ENCODE measurements at regions of chr10 and their contacts with region 1.

Region 1: GRCh38 chr10:100433253-100434240 is 29.3 kb upstream of the WNT8B start:
- DNase-seq: peak; percentile 88 to 99 (median 94)
- ATAC-seq: peak; percentile 99
- H3K4me3 ChIP-seq: no peak overlapping the region
- H3K4me3 Mint-ChIP-seq: no peak overlapping the region
- H3K27ac ChIP-seq: no peak overlapping the region
- H3K27ac Mint-ChIP-seq: no peak overlapping the region
- H3K4me1 ChIP-seq: peaks cover 5% of the 10 kb centered on the region
- H3K4me1 Mint-ChIP-seq: no peaks in the 10 kb centered on the region
- H3K27me3 ChIP-seq: no peaks in the 10 kb centered on the region
- H3K27me3 Mint-ChIP-seq: peaks cover 5% of the 10 kb centered on the region
- CTCF ChIP-seq: peak; percentile 100

Region 2: DNA sequence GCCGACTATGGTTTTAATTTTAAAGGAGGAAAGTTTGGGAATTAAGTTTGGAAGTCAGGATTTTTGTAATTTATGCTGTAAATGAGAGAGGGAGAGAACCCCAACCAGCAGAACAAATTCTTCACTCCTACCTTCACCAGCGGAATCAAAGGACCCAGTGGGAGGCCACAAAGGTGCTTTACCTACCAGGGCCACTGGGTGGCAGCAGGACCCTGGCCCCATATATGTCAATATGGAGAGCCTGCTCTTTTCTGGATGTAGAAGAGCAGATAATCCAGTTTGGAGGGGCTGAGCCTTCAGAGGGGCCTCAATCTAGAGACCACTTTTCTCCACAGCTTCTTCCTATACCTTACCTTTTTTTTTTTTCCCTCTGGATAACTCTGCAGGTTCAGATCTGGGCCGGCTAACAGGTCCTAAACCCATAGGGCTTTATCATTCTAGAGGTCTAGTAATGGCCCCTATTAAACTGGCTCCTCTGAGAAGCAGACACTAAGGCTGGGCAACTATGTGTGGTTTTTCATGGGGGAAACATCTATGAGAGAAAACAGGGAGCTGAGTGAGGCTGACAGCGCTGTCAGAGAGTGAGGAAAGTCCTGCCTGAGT is 95.0 kb before region 1 on chr10:
- CTCF ChIA-PET with region 1: interaction called, 10 read pairs
- POLR2A ChIA-PET with region 1: interaction called, 3 read pairs
- intact Hi-C with region 1: loop called (anchors 1 kb)
- DNase-seq: peak; percentile 66 to 85 (median 76)
- ATAC-seq: peak; percentile 94
- H3K4me3 ChIP-seq: no peak overlapping the region
- H3K4me3 Mint-ChIP-seq: no peak overlapping the region
- H3K27ac ChIP-seq: no peak overlapping the region
- H3K27ac Mint-ChIP-seq: no peak overlapping the region
- H3K4me1 ChIP-seq: no peaks in the 10 kb centered on the region
- H3K4me1 Mint-ChIP-seq: no peaks in the 10 kb centered on the region
- H3K27me3 ChIP-seq: no peaks in the 10 kb centered on the region
- H3K27me3 Mint-ChIP-seq: peaks cover 4% of the 10 kb centered on the region
- CTCF ChIP-seq: peak; percentile 87

Region 3: GRCh38 chr10:100419911-100420449 is 13.6 kb before region 1 on chr10:
- CTCF ChIA-PET with region 1: no interaction called
- POLR2A ChIA-PET with region 1: no interaction called
- intact Hi-C with region 1: no loop called
- DNase-seq: no peak
- ATAC-seq: no peak
- H3K4me3 ChIP-seq: no peak overlapping the region
- H3K4me3 Mint-ChIP-seq: no peak overlapping the region
- H3K27ac ChIP-seq: no peak overlapping the region
- H3K27ac Mint-ChIP-seq: no peak overlapping the region
- H3K4me1 ChIP-seq: no peaks in the 10 kb centered on the region
- H3K4me1 Mint-ChIP-seq: no peaks in the 10 kb centered on the region
- H3K27me3 ChIP-seq: no peaks in the 10 kb centered on the region
- H3K27me3 Mint-ChIP-seq: peaks cover 16% of the 10 kb centered on the region
- CTCF ChIP-seq: no peak

Region 4: DNA sequence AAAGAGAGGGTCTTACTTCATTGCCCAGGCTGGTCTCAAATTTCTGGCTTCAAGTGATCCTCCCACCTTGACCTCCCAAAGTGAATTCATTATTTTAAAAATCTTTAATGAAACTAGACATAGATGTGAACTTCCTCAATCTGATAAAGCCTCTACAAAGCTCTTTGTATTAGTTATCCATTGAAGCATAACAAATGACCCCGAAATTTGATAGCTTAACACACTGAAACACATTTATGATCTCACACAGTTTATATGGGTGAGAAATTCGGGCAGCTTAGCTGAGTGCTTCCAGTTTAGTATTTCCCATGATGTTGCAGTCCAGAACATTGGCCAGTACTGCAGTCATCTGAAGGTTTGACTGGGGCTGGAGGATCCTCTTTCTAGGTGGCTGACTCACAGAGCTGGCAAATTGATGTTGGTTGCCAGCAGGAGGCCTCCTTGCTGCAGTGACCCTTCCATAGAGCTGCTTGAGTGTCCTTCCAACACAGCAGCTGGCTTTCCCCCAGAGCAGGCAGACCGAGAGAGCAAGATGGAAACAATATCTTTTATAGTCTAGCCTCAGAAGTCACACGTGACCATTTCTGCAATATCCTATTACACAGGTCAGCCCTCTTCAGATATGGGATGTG is 12.7 kb after region 1 on chr10:
- CTCF ChIA-PET with region 1: no interaction called
- POLR2A ChIA-PET with region 1: no interaction called
- intact Hi-C with region 1: no loop called
- DNase-seq: no peak
- ATAC-seq: no peak
- H3K4me3 ChIP-seq: no peak overlapping the region
- H3K4me3 Mint-ChIP-seq: no peak overlapping the region
- H3K27ac ChIP-seq: no peak overlapping the region
- H3K27ac Mint-ChIP-seq: no peak overlapping the region
- H3K4me1 ChIP-seq: no peaks in the 10 kb centered on the region
- H3K4me1 Mint-ChIP-seq: no peaks in the 10 kb centered on the region
- H3K27me3 ChIP-seq: no peaks in the 10 kb centered on the region
- H3K27me3 Mint-ChIP-seq: peaks cover 8% of the 10 kb centered on the region
- CTCF ChIP-seq: no peak

Region 5: DNA sequence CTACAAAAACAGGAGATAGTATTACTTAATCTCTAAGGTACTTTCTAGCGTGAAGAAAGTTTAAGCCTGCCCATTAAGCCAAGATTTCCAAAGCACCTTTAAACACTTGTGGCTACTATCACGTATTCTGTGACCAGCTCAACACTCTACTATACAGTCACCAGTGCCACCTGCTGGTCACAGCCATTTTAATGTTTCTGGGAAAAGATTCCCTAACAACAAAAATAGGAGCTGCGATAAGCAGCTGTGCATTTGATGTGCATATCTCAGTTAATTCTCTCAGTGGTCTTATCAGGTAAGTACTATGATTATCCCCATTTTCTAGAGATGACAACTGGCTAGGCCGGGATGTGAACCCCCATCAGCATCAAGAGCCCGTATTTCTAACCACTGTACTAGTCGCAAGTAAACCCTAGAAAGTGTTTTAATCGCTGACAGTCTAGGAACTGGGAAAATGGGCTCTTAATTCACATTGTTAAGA is 85.3 kb after region 1 on chr10:
- CTCF ChIA-PET with region 1: interaction called, 16 read pairs
- POLR2A ChIA-PET with region 1: interaction called, 4 read pairs
- intact Hi-C with region 1: loop called in 1 of 2 experiments (anchors 1 kb)
- DNase-seq: peak; percentile 38 to 76 (median 52)
- ATAC-seq: peak; percentile 80
- H3K4me3 ChIP-seq: no peak overlapping the region
- H3K4me3 Mint-ChIP-seq: no peak overlapping the region
- H3K27ac ChIP-seq: no peak overlapping the region
- H3K27ac Mint-ChIP-seq: peak overlapping the region; percentile 29
- H3K4me1 ChIP-seq: peaks cover 12% of the 10 kb centered on the region
- H3K4me1 Mint-ChIP-seq: peaks cover 16% of the 10 kb centered on the region
- H3K27me3 ChIP-seq: no peaks in the 10 kb centered on the region
- H3K27me3 Mint-ChIP-seq: no peaks in the 10 kb centered on the region
- CTCF ChIP-seq: peak; percentile 88

Measured in CD4-positive, alpha-beta T cell (primary cell).